A673 (cell line): ENCODE measurements at regions of chr2 and their contacts with region 1.

Region 1: GRCh38 chr2:62216616-62217015 is 20.7 kb downstream of the B3GNT2 start:
- DNase-seq: no peak
- H3K4me3 ChIP-seq: no peak overlapping the region
- H3K27ac ChIP-seq: no peak overlapping the region
- H3K4me1 ChIP-seq: no peaks in the 10 kb centered on the region
- H3K27me3 ChIP-seq: no peaks in the 10 kb centered on the region
- CTCF ChIP-seq: no peak

Region 2: DNA sequence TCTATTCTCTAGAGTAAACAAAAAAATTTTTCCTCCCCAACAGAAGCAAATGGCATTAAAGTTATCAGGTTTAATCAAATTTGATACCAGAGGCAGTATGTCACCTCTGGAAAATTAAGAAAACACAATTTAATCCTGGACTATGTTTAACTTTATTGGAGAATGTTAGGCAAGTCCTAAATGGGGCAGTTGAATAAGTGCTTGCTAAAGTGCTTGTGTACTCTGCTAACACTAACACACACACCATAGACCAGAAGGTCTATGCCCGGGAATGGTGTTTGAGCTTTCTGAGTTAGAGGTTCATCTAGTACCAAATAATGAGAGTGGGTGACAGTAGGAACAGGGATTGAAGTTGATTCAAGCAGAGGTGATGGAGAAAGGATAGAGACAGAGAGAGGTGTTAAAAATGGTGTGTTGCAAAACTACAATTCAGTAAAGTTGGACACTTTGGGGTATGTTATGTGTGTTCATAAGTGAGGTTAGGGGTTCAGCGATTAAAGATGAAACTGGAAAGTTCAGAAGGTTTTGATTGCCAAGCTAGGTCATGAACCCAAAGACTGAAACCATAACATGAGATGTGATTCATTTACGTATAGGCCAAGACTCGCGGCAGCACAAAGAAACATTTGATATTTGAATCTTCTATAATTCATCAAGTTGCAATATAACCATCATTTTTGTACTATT is 1239.6 kb before region 1 on chr2:
- CTCF ChIA-PET with region 1: no interaction called
- POLR2A ChIA-PET with region 1: no interaction called
- intact Hi-C with region 1: no loop called
- DNase-seq: no peak
- H3K4me3 ChIP-seq: no peak overlapping the region
- H3K27ac ChIP-seq: no peak overlapping the region
- H3K4me1 ChIP-seq: no peaks in the 10 kb centered on the region
- H3K27me3 ChIP-seq: no peaks in the 10 kb centered on the region
- CTCF ChIP-seq: no peak

Region 3: GRCh38 chr2:61732787-61733186 is 483.8 kb before region 1 on chr2:
- CTCF ChIA-PET with region 1: no interaction called
- POLR2A ChIA-PET with region 1: interaction called, 10 read pairs
- intact Hi-C with region 1: no loop called
- DNase-seq: no peak
- H3K4me3 ChIP-seq: no peak overlapping the region
- H3K27ac ChIP-seq: no peak overlapping the region
- H3K4me1 ChIP-seq: no peaks in the 10 kb centered on the region
- H3K27me3 ChIP-seq: no peaks in the 10 kb centered on the region
- CTCF ChIP-seq: no peak